ENCODE measurements at regions of chr10 and their contacts with region 1.

Region 1: GRCh38 chr10:100728928-100729861 is 16.2 kb upstream of the PAX2 start:
- DNase-seq: peak; percentile 83
- H3K4me3 ChIP-seq: no peak overlapping the region; a peak in 1 of 4 replicates
- H3K27ac ChIP-seq: no peak overlapping the region
- H3K4me1 ChIP-seq: peaks cover 0 to 11% of the 10 kb centered on the region in 2 experiments; a peak in 1 of 4 replicates
- H3K27me3 ChIP-seq: peaks cover 91% of the 10 kb centered on the region
- CTCF ChIP-seq: peak; percentile 40
- EP300 ChIP-seq: no peak
- RAD21 ChIP-seq: peak; percentile 64

Region 2: GRCh38 chr10:100670828-100671479 is 58.2 kb before region 1 on chr10:
- CTCF ChIA-PET with region 1: interaction called, 14 read pairs
- POLR2A ChIA-PET with region 1: no interaction called
- DNase-seq: peak; percentile 92
- H3K4me3 ChIP-seq: peak overlapping the region; percentile 6 to 51; a peak in 1 of 4 replicates
- H3K27ac ChIP-seq: no peak overlapping the region
- H3K4me1 ChIP-seq: no peaks in the 10 kb centered on the region; a peak in 1 of 4 replicates
- H3K27me3 ChIP-seq: peaks cover 30% of the 10 kb centered on the region
- CTCF ChIP-seq: peak; percentile 70
- EP300 ChIP-seq: no peak
- RAD21 ChIP-seq: peak; percentile 54

Region 3: GRCh38 chr10:100715445-100716385 is 13.5 kb before region 1 on chr10:
- CTCF ChIA-PET with region 1: interaction called, 21 read pairs
- POLR2A ChIA-PET with region 1: no interaction called
- DNase-seq: peak; percentile 24
- H3K4me3 ChIP-seq: no peak overlapping the region
- H3K27ac ChIP-seq: no peak overlapping the region
- H3K4me1 ChIP-seq: peaks cover 0 to 19% of the 10 kb centered on the region in 2 experiments; a peak in 2 of 4 replicates
- H3K27me3 ChIP-seq: peaks cover 34% of the 10 kb centered on the region
- CTCF ChIP-seq: no peak
- EP300 ChIP-seq: no peak
- RAD21 ChIP-seq: no peak

Region 4: GRCh38 chr10:100827819-100828737 is 98.9 kb after region 1 on chr10:
- CTCF ChIA-PET with region 1: interaction called, 13 read pairs
- POLR2A ChIA-PET with region 1: no interaction called
- DNase-seq: peak; percentile 91
- H3K4me3 ChIP-seq: peak overlapping the region; percentile 38 to 39
- H3K27ac ChIP-seq: no peak overlapping the region
- H3K4me1 ChIP-seq: peaks cover 0 to 17% of the 10 kb centered on the region in 2 experiments; a peak in 1 of 4 replicates
- H3K27me3 ChIP-seq: peaks cover 77% of the 10 kb centered on the region
- CTCF ChIP-seq: no peak; the same call in 1 of the 2 replicates
- EP300 ChIP-seq: no peak
- RAD21 ChIP-seq: peak; percentile 64

Region 5: DNA sequence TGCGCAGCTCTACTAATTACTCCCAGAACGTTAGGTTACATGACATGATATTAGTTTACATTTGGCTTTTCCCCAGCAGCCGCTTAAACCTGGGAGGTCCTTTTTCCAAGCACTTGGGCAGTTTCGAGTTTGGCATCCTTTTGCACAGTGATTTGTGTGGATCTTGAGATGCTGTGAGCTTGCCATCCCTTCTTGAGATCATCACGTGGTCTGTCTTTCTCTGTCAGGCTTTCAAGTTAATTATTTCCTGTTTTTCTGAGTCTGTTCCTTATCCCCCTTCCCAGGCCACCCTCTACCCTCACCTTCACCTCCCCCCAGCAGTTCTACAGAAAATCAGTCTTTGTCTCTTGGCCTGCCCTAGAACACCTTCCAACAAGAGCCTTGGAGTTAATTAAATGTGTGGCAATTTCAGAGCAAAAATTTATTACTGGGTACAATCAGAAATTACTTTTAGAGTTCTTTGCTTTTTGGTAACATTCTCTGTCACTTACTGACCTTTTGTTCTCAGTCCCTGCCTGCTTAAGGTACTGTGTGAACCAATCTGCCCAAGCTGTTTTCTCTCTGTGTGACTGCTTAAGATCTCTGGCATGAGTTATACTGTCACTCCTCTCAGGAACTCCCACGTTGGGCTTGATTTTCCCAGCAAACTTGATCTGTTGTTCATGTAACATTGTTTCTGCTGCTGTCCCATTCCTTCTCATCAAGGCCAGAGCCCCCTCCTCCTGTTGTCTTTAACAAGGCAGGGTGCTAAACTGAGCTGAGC is 180.5 kb after region 1 on chr10:
- CTCF ChIA-PET with region 1: no interaction called
- POLR2A ChIA-PET with region 1: no interaction called
- DNase-seq: no peak
- H3K4me3 ChIP-seq: no peak overlapping the region
- H3K27ac ChIP-seq: peak overlapping the region; percentile 25 to 48; a peak in 3 of 4 replicates
- H3K4me1 ChIP-seq: peaks cover 15 to 21% of the 10 kb centered on the region in 2 experiments; a peak in 3 of 4 replicates
- H3K27me3 ChIP-seq: no peaks in the 10 kb centered on the region
- CTCF ChIP-seq: no peak
- EP300 ChIP-seq: no peak
- RAD21 ChIP-seq: no peak